Kidney (tissue), 22 donors: ENCODE measurements at regions of chr13 and their contacts with region 1.

Region 1: GRCh38 chr13:86541461-86541860 is 742.2 kb upstream of the SLITRK6 start:
- DNase-seq: no peak
- H3K4me3 ChIP-seq: no peak overlapping the region
- H3K27ac ChIP-seq: no peak overlapping the region
- H3K4me1 ChIP-seq: no peaks in the 10 kb centered on the region
- H3K27me3 ChIP-seq: no peaks in the 10 kb centered on the region
- CTCF ChIP-seq: no peak

Region 2: DNA sequence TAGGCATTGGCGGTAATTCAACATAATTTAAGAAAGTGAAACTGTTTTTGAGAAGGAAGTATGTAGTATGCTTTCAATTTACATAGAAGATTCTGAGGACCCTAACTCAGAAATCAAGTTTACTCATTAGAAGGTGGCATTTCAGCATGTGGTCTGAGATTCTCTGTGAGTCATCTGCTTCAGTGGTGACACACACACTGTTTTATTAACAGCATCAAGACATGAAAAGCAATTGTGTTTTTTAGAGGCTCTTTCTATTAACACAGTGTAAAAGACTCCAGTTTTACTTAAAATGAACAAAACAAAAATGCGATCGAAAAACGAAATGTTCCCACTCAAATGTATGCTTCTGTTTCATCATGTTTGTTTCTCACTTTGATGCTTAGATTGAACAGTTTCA is 59.9 kb after region 1 on chr13:
- intact Hi-C with region 1: loop called (anchors 10 kb)
- DNase-seq: no peak
- H3K4me3 ChIP-seq: no peak overlapping the region
- H3K27ac ChIP-seq: no peak overlapping the region
- H3K4me1 ChIP-seq: no peaks in the 10 kb centered on the region
- H3K27me3 ChIP-seq: no peaks in the 10 kb centered on the region
- CTCF ChIP-seq: no peak